Prostate gland (tissue), 2 donors: ENCODE measurements at regions of chr12 and their contacts with region 1.

Region 1: DNA sequence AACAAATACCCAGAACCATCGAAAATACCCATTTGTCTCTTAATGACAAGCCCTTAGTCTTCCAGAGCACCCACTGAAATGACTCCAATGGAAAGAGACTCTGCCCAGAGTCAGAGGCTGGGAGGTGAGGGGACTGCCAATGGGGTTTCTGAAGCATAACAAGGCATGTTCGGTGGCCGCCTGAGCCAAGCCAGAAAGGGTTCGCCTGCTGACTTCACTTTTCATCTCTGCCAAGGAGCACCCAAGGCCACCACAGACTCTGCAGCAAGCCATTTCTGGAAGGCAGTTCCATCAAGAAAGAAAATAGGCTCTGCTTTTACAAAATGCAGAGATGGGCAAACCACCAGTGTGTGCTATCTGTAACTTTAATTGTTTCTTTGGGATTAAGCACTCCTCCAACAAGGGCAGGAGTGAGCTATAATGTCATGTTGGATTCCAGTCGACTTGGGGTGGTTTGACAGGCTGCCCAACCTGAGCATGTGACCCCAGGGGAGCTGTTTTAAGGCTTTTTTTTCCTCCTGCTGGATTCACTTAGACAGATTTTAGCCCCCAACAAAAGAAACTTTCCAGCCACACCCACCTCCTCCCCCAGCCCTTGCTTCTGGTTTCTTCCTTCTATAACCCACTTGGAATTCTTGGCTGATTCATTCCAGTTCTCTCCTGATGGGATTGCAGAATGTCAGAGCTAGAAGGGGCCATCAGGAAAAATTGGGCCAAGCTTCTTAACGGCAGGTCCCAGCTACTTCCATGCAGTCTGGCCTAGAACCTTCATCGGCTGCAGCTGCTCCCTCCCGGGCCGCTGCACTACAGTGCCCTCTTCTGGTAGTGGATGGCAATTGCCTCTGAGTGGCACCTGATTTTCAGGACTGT is 24.1 kb downstream of the CKAP4 start:
- DNase-seq: peak; percentile 49
- H3K4me3 ChIP-seq: no peak overlapping the region
- H3K27ac ChIP-seq: no peak overlapping the region
- H3K4me1 ChIP-seq: no peaks in the 10 kb centered on the region
- H3K27me3 ChIP-seq: no peaks in the 10 kb centered on the region
- CTCF ChIP-seq: peak; percentile 54 to 88 (median 78)
- POLR2A ChIP-seq: no peak

Region 2: DNA sequence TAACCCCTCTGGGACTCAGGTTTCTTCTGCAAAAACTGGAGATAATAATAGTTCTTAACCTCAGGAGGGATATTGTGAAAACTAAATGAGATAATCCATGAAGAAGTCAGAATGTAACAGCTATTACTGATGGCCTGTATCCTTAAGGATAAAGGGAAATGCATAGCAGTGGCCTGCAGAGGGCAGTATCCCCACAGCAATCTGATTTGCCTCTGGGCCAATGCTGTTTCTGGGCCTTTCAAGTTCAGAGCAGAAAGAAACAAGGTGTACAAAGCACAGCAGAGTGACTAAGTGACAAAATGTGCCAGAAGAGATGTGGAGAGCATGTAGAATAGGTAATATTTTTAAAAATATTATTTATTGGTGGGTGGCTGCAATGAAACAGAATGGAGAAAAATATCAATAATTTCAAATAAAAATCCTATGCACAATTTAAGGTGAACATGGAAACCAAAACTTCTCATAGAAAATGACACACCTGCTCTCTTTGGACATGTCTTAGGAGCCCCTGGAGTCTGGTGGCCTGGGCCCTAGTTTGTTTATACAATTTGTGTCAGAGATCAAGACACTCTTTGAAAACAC is 803.0 kb before region 1 on chr12:
- intact Hi-C with region 1: loop called (anchors 1 kb)
- DNase-seq: peak; percentile 71
- H3K4me3 ChIP-seq: no peak overlapping the region
- H3K27ac ChIP-seq: no peak overlapping the region
- H3K4me1 ChIP-seq: no peaks in the 10 kb centered on the region
- H3K27me3 ChIP-seq: no peaks in the 10 kb centered on the region
- CTCF ChIP-seq: peak; percentile 78 to 93 (median 91)
- POLR2A ChIP-seq: no peak

Region 3: GRCh38 chr12:106282457-106283097 is 58.9 kb after region 1 on chr12:
- intact Hi-C with region 1: loop called (anchors 5 kb)
- DNase-seq: no peak
- H3K4me3 ChIP-seq: no peak overlapping the region
- H3K27ac ChIP-seq: no peak overlapping the region
- H3K4me1 ChIP-seq: no peaks in the 10 kb centered on the region
- H3K27me3 ChIP-seq: no peaks in the 10 kb centered on the region
- CTCF ChIP-seq: peak; percentile 36 to 80 (median 71)
- POLR2A ChIP-seq: no peak